ENCODE measurements at regions of chr2 and their contacts with region 1.

Region 1: GRCh38 chr2:69770193-69771146 is 28.5 kb downstream of the ANXA4 start:
- DNase-seq: peak; percentile 47 to 90
- H3K4me3 ChIP-seq: 0 out of 2 replicates have a peak overlapping the region, but pooled peaks have one; percentile 7
- H3K27ac ChIP-seq: peak overlapping the region; percentile 63
- H3K4me1 ChIP-seq: peaks cover 67% of the 10 kb centered on the region
- H3K27me3 ChIP-seq: no peaks in the 10 kb centered on the region
- CTCF ChIP-seq: no peak

Region 2: DNA sequence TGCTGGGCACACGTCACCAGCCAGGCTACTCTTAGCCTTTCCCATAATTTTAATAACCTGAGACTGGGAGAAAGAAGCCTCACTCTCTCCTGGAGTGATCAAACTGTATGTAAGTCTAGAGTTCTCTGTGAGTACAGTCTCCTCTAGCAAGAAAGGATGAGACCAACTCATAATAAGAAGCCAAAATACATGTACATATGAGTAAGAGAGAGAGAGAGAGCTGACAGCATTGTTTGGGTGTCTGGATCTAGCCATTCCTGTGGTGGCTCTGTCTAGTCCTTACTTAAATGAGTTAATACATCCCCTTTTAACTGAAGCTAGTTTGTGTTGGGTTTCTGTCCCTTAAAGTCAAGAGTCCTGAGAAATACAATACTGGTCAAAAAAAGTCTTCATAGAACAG is 54.5 kb before region 1 on chr2:
- CTCF ChIA-PET with region 1: no interaction called
- POLR2A ChIA-PET with region 1: no interaction called
- intact Hi-C with region 1: no loop called
- DNase-seq: no peak
- H3K4me3 ChIP-seq: no peak overlapping the region
- H3K27ac ChIP-seq: no peak overlapping the region
- H3K4me1 ChIP-seq: no peaks in the 10 kb centered on the region
- H3K27me3 ChIP-seq: no peaks in the 10 kb centered on the region
- CTCF ChIP-seq: no peak

Region 3: DNA sequence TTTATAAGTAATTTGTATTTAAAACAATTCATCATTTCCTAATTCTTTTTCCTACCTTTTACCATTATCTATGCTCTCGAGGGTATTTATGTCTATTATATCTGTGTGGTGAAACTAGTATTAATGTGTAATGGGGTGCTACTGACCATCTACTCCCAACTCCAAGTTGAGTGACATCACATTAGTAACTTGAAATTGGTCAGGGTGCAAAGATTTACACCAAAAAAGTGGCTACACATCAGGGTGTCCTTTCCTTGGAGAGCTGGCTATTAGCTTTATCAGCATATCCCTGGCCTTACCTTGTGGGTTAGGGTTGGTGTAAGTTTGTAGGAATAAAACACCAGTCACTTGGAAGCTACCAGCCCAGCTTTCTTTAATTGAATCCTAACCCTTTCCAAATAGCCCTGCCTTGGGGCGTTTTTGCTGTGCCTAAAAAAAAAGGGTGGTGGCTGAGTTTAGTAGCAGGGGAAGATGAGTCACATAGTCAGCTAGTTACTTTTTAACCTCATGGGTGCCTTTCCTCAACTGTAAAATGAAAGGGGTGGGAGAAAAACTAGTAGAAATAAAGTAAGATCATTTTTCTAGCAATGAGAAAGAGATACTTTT is 14.5 kb before region 1 on chr2:
- CTCF ChIA-PET with region 1: no interaction called
- POLR2A ChIA-PET with region 1: no interaction called
- intact Hi-C with region 1: loop called (anchors 1 kb)
- DNase-seq: peak; percentile 81 to 91
- H3K4me3 ChIP-seq: peak overlapping the region; percentile 27; the same call in 1 of the 2 replicates
- H3K27ac ChIP-seq: peak overlapping the region; percentile 62
- H3K4me1 ChIP-seq: peaks cover 31% of the 10 kb centered on the region
- H3K27me3 ChIP-seq: no peaks in the 10 kb centered on the region
- CTCF ChIP-seq: no peak

Region 4: GRCh38 chr2:69798909-69799526 is 28.5 kb after region 1 on chr2:
- CTCF ChIA-PET with region 1: no interaction called
- POLR2A ChIA-PET with region 1: no interaction called
- intact Hi-C with region 1: loop called (anchors 2 kb)
- DNase-seq: peak; percentile 37 to 75
- H3K4me3 ChIP-seq: no peak overlapping the region
- H3K27ac ChIP-seq: peak overlapping the region; percentile 40
- H3K4me1 ChIP-seq: peaks cover 26% of the 10 kb centered on the region
- H3K27me3 ChIP-seq: no peaks in the 10 kb centered on the region
- CTCF ChIP-seq: no peak

Region 5: GRCh38 chr2:69829256-69830046 is 59.0 kb after region 1 on chr2 and contains the start of gene GMCL1:
- CTCF ChIA-PET with region 1: no interaction called
- POLR2A ChIA-PET with region 1: interaction called, 11 read pairs
- intact Hi-C with region 1: no loop called
- DNase-seq: peak; percentile 86 to 97
- H3K4me3 ChIP-seq: peak within 1 kb of the TSS; percentile 82
- H3K27ac ChIP-seq: peak within 1 kb of the TSS; percentile 75
- H3K4me1 ChIP-seq: peaks cover 22% of the 10 kb centered on the region
- H3K27me3 ChIP-seq: no peaks in the 10 kb centered on the region
- CTCF ChIP-seq: no peak
- total RNA-seq, gene GMCL1: 15.1 and 17.4 TPM in 2 replicates

Measured in PC-9 (cell line).